Sigmoid colon (tissue), 7 donors: ENCODE measurements at regions of chr1 and their contacts with region 1.

Region 1: GRCh38 chr1:85494904-85495266 is 29.9 kb upstream of the DDAH1 start:
- DNase-seq: peak; percentile 66
- H3K4me3 ChIP-seq: no peak overlapping the region
- H3K27ac ChIP-seq: peak overlapping the region in 1 of 4 donors; percentile 6
- H3K4me1 ChIP-seq: peaks cover 0 to 11% (median 4%) of the 10 kb centered on the region in 4 donors
- H3K27me3 ChIP-seq: no peaks in the 10 kb centered on the region
- CTCF ChIP-seq: peak in 2 of 4 experiments; percentile 36 to 46
- EP300 ChIP-seq: no peak
- POLR2A ChIP-seq: no peak

Region 2: DNA sequence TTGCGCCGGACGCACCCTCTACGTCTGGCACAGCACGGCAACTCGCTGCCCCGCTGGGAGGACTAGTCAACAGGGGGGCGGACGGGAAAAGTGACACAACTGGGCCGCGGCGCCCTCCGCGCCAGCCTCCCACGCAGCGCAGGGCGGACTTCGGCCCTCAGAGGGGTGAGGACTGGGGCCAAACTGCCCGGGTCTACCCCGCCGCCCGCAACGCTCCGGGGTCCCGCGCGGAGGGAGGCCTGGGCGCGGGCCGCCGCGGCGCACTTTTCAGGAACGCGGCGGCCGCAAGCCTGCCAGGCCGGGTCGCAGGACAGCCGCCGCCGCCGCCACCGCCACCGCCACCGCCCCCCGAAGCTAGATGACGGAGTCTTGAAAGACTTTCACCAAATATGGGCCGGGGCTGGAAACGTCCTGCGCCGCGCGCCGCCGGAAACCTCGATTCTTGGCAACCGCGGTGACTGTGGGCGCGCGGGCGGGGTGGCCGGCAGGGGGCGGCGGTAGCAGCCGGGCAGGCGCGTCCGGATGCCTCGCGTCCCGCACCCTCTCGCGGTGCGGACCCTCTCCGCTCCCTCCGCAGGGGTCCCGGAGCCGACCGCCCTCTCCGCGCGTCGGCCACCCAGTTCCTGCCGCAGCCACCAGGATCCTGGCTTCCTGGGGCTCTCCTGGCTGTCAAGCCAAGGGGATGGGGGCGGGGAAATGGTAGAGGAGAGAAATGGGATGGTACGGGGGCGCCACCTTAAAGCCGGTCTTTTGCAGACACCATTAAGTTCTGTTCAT is 81.9 kb after region 1 on chr1:
- intact Hi-C with region 1: loop called (anchors 5 kb)
- DNase-seq: peak; percentile 96
- H3K4me3 ChIP-seq: peak overlapping the region; percentile 67 to 84 (median 75)
- H3K27ac ChIP-seq: peak overlapping the region; percentile 96 to 99 (median 98)
- H3K4me1 ChIP-seq: peaks cover 0 to 42% (median 31%) of the 10 kb centered on the region in 4 donors
- H3K27me3 ChIP-seq: no peaks in the 10 kb centered on the region
- CTCF ChIP-seq: peak in 3 of 4 experiments; percentile 17 to 88 (median 85)
- EP300 ChIP-seq: peak in 1 of 4 donors; percentile 36
- POLR2A ChIP-seq: peak; percentile 40 to 77

Region 3: GRCh38 chr1:85692730-85693314 is 197.9 kb after region 1 on chr1:
- intact Hi-C with region 1: loop called (anchors 10 kb)
- DNase-seq: no peak
- H3K4me3 ChIP-seq: no peak overlapping the region
- H3K27ac ChIP-seq: no peak overlapping the region
- H3K4me1 ChIP-seq: peaks cover 0 to 4% (median 0%) of the 10 kb centered on the region in 4 donors
- H3K27me3 ChIP-seq: no peaks in the 10 kb centered on the region
- CTCF ChIP-seq: peak in 3 of 4 experiments; percentile 38 to 49 (median 41)
- EP300 ChIP-seq: no peak
- POLR2A ChIP-seq: no peak